Heart right ventricle (tissue), 16 donors: ENCODE measurements at regions of chr6 and their contacts with region 1.

Region 1: DNA sequence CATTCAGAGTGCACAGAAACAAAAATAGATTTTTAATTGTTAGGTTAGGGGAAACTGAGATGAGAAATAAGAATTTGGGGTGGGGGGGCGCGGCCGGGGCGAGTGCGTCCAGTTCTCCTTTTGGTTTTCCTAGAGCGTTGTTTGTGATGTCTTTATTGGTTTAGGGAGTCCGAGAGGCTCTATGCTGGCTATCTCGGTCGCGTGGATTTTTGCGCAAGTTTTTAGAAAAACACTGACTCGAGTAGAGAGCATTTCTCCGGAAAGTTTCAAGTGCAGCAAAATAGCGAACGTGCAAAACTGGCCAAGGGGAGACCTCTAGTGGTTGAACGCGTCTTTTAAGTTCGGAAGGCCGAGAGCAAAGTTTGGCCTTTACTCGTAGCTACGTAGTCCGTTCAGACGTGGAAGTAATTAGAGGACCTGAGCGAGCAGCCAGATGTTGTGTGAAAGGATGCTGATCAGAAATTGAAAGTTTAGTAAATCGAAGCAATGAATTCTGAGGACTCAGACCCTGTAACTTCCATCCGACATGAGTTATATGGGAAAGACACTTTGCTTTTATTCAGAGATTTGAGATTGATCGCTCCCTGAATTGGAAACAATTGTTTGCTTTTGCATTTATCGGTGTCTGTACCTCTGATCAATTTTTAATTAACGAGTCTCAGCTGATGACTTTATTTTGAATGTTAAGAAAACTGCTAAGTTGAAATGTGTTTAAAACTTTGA is 2.7 kb downstream of the L3MBTL3 start:
- DNase-seq: peak; percentile 35 to 88
- ATAC-seq: peak; percentile 77 to 92 (median 88)
- H3K4me3 ChIP-seq: peak overlapping the region; percentile 51 to 91 (median 84)
- H3K27ac ChIP-seq: peak overlapping the region in 9 of 10 donors; percentile 53 to 93 (median 78)
- H3K4me1 ChIP-seq: peaks cover 0 to 13% (median 3%) of the 10 kb centered on the region in 9 donors
- H3K27me3 ChIP-seq: no peaks in the 10 kb centered on the region
- CTCF ChIP-seq: peak; percentile 43 to 90 (median 77)

Region 2: GRCh38 chr6:129411092-129411491 is 610.0 kb before region 1 on chr6:
- intact Hi-C with region 1: no loop called
- DNase-seq: no peak
- ATAC-seq: no peak
- H3K4me3 ChIP-seq: no peak overlapping the region
- H3K27ac ChIP-seq: no peak overlapping the region
- H3K4me1 ChIP-seq: peaks cover 0 to 7% (median 0%) of the 10 kb centered on the region in 9 donors
- H3K27me3 ChIP-seq: no peaks in the 10 kb centered on the region
- CTCF ChIP-seq: no peak

Region 3: DNA sequence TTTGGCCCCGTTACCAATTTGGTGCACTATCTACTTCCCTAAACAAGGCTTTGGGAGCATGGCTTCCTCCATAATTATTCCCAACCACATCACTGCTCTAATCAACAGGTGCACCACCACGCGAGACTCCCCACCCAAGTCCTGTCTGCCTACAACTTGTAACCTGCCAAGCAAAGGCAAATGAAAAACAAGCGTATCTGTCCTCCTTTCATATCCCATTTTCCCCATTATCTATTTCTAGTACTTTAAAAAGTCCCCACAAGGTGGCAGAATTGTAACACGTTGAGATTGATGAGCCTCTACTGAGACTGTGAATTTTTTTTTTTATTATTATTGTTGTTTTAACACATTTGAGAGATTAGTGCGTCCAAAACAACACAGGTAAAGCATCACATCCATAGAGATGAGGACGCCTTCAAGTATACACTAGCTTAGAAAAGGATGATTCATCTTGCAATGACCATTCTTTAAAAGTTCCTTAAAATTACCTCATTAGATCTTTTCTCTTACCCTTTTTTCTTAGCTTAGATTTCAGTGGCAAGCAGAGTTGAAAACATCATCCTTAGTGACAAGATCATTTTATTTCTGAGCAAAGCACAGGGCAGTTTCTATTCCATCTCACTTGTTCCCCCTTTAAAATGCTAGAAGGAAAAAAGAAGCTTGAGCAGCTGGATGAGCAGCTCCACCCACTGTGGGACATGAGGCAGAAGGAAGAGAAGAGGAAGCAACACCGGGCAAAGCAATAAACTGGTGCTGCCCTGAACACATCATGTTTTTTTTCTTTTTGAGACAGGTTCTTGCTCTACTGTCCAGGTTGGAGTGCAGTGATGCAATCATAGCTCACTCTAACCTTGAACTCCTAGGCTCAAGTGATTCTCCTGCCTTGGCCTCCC is 521.9 kb before region 1 on chr6:
- intact Hi-C with region 1: loop called in 3 of 10 experiments (anchors 5 to 10 kb)
- DNase-seq: no peak
- ATAC-seq: peak; percentile 18 to 57 (median 34)
- H3K4me3 ChIP-seq: no peak overlapping the region
- H3K27ac ChIP-seq: peak overlapping the region in 2 of 10 donors; percentile 33 to 53
- H3K4me1 ChIP-seq: peaks cover 3 to 64% (median 30%) of the 10 kb centered on the region in 9 donors
- H3K27me3 ChIP-seq: no peaks in the 10 kb centered on the region
- CTCF ChIP-seq: peak; percentile 27 to 75 (median 62)

Region 4: DNA sequence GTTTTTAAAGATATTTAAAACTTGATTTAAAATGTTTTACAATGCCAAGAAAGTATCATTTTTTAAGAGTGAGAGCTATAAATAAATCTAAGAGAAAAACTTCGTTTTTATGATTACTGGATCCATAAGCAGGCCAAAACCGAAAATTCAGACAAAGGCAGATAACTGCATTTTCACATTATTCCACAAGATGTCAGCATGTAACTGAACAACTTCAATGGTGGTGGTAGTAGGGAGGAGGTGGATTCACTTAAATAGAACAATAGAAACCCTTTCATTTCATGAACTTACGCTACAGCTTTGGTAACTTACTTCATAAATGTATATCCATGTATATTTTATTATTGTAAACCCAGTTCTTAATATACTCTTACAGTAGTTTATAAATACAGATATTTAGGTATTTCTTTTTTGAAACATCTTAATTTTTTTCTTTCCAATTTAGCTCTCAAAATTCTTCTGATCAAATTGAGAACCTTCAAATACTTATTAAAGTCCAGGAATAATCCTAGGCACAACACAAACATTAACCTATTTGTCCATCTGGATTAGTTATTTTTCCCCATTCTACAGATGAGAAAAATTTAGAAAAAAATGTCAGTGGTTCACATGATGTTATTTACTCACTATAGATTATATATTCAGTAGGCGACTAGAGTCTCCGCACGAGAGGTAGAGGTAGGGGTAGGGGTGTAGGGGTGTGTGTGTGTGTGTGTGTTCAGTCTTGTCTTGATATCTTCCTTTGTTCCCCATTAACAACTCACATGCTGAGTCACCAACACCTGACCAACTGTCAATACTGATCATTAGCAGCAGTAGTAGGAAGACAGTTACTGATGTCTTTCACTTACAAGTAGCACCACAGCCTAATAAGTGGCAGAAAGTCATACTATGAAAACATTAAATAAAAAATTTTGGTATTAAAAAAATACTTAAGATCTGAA is 422.6 kb before region 1 on chr6:
- intact Hi-C with region 1: loop called (anchors 5 to 10 kb)
- DNase-seq: peak in 1 of 2 donors; percentile 20
- ATAC-seq: peak in 7 of 8 donors; percentile 58 to 81 (median 74)
- H3K4me3 ChIP-seq: no peak overlapping the region
- H3K27ac ChIP-seq: no peak overlapping the region
- H3K4me1 ChIP-seq: peaks cover 0 to 8% (median 0%) of the 10 kb centered on the region in 9 donors
- H3K27me3 ChIP-seq: no peaks in the 10 kb centered on the region
- CTCF ChIP-seq: peak; percentile 59 to 93 (median 83)

Region 5: DNA sequence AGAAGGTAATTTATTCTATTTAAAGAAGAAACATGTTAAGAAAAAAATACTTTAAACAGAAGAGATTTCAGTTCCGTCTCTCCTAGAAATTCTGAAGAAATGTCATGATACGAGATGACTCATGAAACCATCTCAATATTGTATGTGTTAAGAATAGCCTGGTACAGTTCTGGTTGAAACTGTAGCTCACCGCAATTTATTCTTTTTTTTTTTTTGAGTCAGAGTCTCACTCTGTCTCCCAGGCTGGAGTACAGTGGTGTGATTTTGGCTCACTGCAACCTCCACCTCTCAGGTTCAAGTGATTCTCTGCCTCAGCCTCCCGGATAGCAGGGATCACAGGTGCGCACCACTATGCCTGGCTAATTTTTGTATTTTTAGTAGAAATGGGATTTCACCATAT is 414.4 kb before region 1 on chr6:
- intact Hi-C with region 1: loop called in 3 of 10 experiments (anchors 5 to 10 kb)
- DNase-seq: no peak
- ATAC-seq: no peak
- H3K4me3 ChIP-seq: no peak overlapping the region
- H3K27ac ChIP-seq: no peak overlapping the region
- H3K4me1 ChIP-seq: peaks cover 0 to 7% (median 0%) of the 10 kb centered on the region in 9 donors
- H3K27me3 ChIP-seq: no peaks in the 10 kb centered on the region
- CTCF ChIP-seq: no peak

Region 6: GRCh38 chr6:129774697-129775447 is 246.2 kb before region 1 on chr6:
- intact Hi-C with region 1: loop called in 2 of 10 experiments (anchors 10 kb)
- DNase-seq: peak; percentile 41 to 67
- ATAC-seq: peak in 7 of 8 donors; percentile 57 to 81 (median 71)
- H3K4me3 ChIP-seq: peak overlapping the region in 4 of 10 donors; percentile 17 to 36 (median 22)
- H3K27ac ChIP-seq: no peak overlapping the region
- H3K4me1 ChIP-seq: no peaks in the 10 kb centered on the region
- H3K27me3 ChIP-seq: peaks cover 0 to 11% (median 5%) of the 10 kb centered on the region in 7 donors
- CTCF ChIP-seq: peak; percentile 65 to 95 (median 88)

Region 7: DNA sequence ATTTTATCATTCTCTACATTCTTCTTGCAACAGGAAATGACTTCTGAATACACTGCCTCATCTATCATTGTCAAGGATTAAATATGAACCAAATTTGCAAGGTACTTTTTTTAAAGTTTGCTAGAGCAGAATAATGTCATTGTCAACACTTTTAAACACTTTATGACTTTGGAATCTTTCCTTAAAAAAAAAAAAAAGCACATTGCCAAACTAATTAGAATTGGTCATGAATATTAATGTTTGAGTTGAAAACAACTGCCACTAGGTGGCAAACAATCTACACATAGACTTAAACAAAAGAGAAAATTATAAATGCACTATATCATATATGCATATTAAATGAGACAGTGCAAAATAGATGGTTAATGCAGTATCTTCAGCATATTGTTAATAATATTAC is 127.4 kb before region 1 on chr6:
- intact Hi-C with region 1: loop called in 5 of 10 experiments (anchors 1 to 10 kb)
- DNase-seq: no peak
- ATAC-seq: no peak
- H3K4me3 ChIP-seq: no peak overlapping the region
- H3K27ac ChIP-seq: no peak overlapping the region
- H3K4me1 ChIP-seq: peaks cover 0 to 21% (median 0%) of the 10 kb centered on the region in 9 donors
- H3K27me3 ChIP-seq: peaks cover 0 to 3% (median 0%) of the 10 kb centered on the region in 7 donors
- CTCF ChIP-seq: peak in 6 of 9 donors; percentile 23 to 51 (median 37)

Region 8: GRCh38 chr6:129936329-129937165 is 84.5 kb before region 1 on chr6:
- intact Hi-C with region 1: loop called in 1 of 10 experiments (anchors 10 kb)
- DNase-seq: peak in 1 of 2 donors; percentile 20
- ATAC-seq: peak in 1 of 8 donors; percentile 39
- H3K4me3 ChIP-seq: no peak overlapping the region
- H3K27ac ChIP-seq: no peak overlapping the region
- H3K4me1 ChIP-seq: no peaks in the 10 kb centered on the region
- H3K27me3 ChIP-seq: peaks cover 0 to 22% (median 9%) of the 10 kb centered on the region in 7 donors
- CTCF ChIP-seq: peak; percentile 6 to 69 (median 60)